Upper lobe of right lung (tissue), 1 donor: ENCODE measurements at regions of chr2 and their contacts with region 1.

Region 1: GRCh38 chr2:197198890-197199289 is 111.7 kb downstream of the ANKRD44 start:
- DNase-seq: peak; percentile 66
- ATAC-seq: peak; percentile 88
- H3K4me3 ChIP-seq: peak overlapping the region; percentile 1
- H3K27ac ChIP-seq: peak overlapping the region; percentile 38
- H3K4me1 ChIP-seq: peaks cover 63% of the 10 kb centered on the region
- H3K27me3 ChIP-seq: no peaks in the 10 kb centered on the region
- CTCF ChIP-seq: no peak

Region 2: GRCh38 chr2:197309691-197310231 is 110.9 kb after region 1 on chr2:
- intact Hi-C with region 1: loop called (anchors 5 kb)
- DNase-seq: peak; percentile 74
- ATAC-seq: peak; percentile 6
- H3K4me3 ChIP-seq: peak overlapping the region; percentile 86
- H3K27ac ChIP-seq: peak overlapping the region; percentile 91
- H3K4me1 ChIP-seq: peaks cover 50% of the 10 kb centered on the region
- H3K27me3 ChIP-seq: no peaks in the 10 kb centered on the region
- CTCF ChIP-seq: no peak